Natural killer cell (primary cell): ENCODE measurements at regions of chr10 and their contacts with region 1.

Region 1: DNA sequence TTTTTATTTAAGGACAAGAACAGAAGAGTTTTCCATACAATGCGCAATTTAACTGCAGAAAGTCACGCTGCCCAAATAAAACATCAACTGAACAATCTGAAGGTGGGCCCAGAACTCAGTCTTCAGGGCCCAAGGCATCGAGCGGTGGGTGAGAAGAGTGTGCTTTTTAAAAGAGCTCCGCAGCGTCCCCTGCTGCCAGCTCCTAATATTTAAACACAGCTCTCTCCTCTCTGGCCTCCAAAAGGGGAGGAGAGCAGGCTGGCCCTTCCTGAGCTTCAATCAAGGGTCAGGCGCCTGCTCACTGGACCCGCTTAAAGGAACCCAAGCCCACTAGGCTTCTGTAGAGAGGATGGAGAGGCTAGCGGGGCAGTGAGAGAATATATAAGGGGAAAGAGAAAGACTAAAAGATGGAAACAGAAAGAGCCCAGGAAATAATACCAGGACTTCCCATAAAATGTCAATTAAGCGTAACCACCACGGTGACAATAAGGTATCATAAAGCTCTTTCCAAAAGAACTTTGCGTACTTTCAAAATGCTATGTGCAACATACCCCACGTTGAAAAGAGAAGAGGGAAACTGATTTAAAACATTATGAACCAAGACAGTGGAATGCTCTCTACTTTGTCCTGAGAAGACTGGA is 2.8 kb downstream of the FAM53B start:
- DNase-seq: peak; percentile 77 to 89
- ATAC-seq: peak; percentile 53 to 72 (median 60)
- H3K4me3 ChIP-seq: peak overlapping the region; percentile 55
- H3K4me3 Mint-ChIP-seq: peak overlapping the region; percentile 99
- H3K27ac ChIP-seq: peak overlapping the region; percentile 68
- H3K27ac Mint-ChIP-seq: peak overlapping the region; percentile 92 to 93
- H3K4me1 ChIP-seq: peaks cover 61% of the 10 kb centered on the region
- H3K4me1 Mint-ChIP-seq: peaks cover 70 to 82% of the 10 kb centered on the region in 2 donors
- H3K27me3 ChIP-seq: no peaks in the 10 kb centered on the region
- H3K27me3 Mint-ChIP-seq: no peaks in the 10 kb centered on the region
- CTCF ChIP-seq: peak; percentile 99

Region 2: GRCh38 chr10:124530215-124530665 is 211.2 kb before region 1 on chr10:
- intact Hi-C with region 1: loop called (anchors 1 kb)
- DNase-seq: peak; percentile 84 to 90
- ATAC-seq: peak; percentile 91 to 93 (median 93)
- H3K4me3 ChIP-seq: no peak overlapping the region
- H3K4me3 Mint-ChIP-seq: no peak overlapping the region
- H3K27ac ChIP-seq: no peak overlapping the region
- H3K27ac Mint-ChIP-seq: peak overlapping the region in 1 of 2 donors; percentile 69
- H3K4me1 ChIP-seq: peaks cover 29% of the 10 kb centered on the region
- H3K4me1 Mint-ChIP-seq: peaks cover 16 to 20% of the 10 kb centered on the region in 2 donors
- H3K27me3 ChIP-seq: no peaks in the 10 kb centered on the region
- H3K27me3 Mint-ChIP-seq: peaks cover 0 to 3% of the 10 kb centered on the region in 2 donors
- CTCF ChIP-seq: peak; percentile 77

Region 3: DNA sequence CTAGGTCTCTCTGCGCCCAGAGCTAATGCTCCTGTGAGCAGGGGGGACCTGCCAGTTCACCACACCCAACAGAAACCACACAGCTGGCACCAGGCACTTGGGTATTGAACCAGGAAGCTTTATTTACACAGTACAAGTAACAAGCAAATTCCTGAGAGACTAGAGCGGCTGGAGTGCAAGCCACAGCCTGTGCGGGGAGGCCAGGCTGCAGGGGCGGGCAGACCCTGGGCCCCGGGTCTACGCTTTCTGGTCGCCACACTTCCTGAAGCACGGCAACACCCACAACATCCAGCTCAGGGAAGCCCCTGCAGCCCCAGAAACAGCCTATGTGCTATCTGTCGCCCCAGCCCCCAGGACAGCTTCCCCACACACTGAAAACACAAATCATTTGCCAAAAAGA is 122.2 kb before region 1 on chr10:
- intact Hi-C with region 1: loop called (anchors 2 kb)
- DNase-seq: peak; percentile 37 to 62
- ATAC-seq: peak; percentile 68 to 85 (median 71)
- H3K4me3 ChIP-seq: no peak overlapping the region
- H3K4me3 Mint-ChIP-seq: peak overlapping the region; percentile 47
- H3K27ac ChIP-seq: peak overlapping the region; percentile 82
- H3K27ac Mint-ChIP-seq: peak overlapping the region; percentile 83 to 88
- H3K4me1 ChIP-seq: peaks cover 78% of the 10 kb centered on the region
- H3K4me1 Mint-ChIP-seq: peaks cover 43 to 73% of the 10 kb centered on the region in 2 donors
- H3K27me3 ChIP-seq: no peaks in the 10 kb centered on the region
- H3K27me3 Mint-ChIP-seq: no peaks in the 10 kb centered on the region
- CTCF ChIP-seq: no peak

Region 4: DNA sequence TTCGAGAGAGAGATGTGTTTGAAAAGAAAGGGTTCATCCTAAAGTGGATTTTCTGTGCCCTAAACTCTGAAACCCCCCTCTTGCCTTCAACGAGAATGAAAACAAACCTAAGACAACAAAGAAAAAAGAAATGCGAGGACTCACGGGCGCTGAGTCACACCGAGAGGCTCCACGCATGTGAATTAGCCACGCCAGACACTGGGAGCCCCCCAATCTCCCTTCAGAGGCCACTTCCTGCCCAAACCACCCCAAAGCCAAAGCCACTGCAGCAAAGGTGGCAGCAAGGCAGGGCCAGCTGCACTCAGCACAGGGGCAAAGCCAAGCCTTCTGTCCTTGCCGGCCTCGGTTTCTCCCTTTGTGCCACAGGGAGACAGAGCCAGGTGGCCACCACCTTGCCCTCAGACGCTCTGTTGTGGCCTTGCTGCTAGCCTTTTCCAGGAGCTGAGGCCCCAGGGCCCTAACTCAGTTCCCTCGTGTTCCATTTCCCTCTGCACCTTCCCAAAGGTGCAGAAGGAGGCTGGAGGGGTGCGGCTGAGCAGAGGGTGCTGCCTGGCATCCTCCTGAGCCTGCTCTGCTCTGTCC is 90.5 kb before region 1 on chr10:
- intact Hi-C with region 1: loop called (anchors 1 kb)
- DNase-seq: peak; percentile 81 to 87
- ATAC-seq: peak; percentile 57 to 77 (median 75)
- H3K4me3 ChIP-seq: no peak overlapping the region
- H3K4me3 Mint-ChIP-seq: peak overlapping the region; percentile 90
- H3K27ac ChIP-seq: peak overlapping the region; percentile 84
- H3K27ac Mint-ChIP-seq: peak overlapping the region; percentile 97 to 99
- H3K4me1 ChIP-seq: peaks cover 100% of the 10 kb centered on the region
- H3K4me1 Mint-ChIP-seq: peaks cover 56 to 90% of the 10 kb centered on the region in 2 donors
- H3K27me3 ChIP-seq: no peaks in the 10 kb centered on the region
- H3K27me3 Mint-ChIP-seq: no peaks in the 10 kb centered on the region
- CTCF ChIP-seq: no peak

Region 5: DNA sequence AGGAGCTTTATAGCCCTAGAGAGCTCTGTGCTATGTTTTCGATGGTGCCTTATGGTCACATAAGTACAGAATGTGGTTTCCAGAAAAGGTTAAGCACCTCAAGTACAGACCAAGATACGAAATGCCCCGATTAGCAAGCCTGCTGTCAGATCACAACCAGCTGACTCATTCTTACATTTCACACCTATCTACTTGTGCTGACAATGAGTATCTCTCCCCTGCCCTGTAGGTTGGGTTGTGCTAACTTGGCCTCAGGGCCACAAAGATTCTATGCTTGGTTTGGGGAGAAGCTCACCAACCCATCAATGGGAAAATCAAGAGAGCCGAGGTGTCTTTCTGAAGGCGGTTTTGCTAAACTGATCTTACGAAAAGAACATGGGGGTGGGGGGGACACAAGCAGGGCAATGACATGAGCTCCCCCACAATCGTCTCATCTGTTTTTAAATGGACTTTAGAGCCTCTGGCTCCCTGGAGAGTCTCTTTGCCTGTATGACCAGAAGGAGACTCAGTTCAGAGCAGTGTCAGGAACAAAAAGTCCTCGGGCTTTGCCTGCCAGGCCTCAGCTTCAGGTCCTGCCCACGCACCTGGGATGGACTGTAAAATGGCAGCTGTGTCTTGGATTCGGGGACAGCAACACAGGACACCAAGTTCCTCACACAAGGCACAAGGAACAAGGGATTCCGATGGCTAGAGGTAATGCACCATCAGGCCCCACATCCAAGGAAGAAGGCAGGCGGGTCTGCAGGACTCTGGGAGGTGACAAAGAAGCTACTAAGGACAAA is 52.3 kb before region 1 on chr10:
- intact Hi-C with region 1: loop called (anchors 1 kb)
- DNase-seq: peak; percentile 67 to 84
- ATAC-seq: peak; percentile 83 to 98 (median 95)
- H3K4me3 ChIP-seq: no peak overlapping the region
- H3K4me3 Mint-ChIP-seq: peak overlapping the region; percentile 81
- H3K27ac ChIP-seq: peak overlapping the region; percentile 67
- H3K27ac Mint-ChIP-seq: peak overlapping the region; percentile 91 to 98
- H3K4me1 ChIP-seq: peaks cover 94% of the 10 kb centered on the region
- H3K4me1 Mint-ChIP-seq: peaks cover 75 to 84% of the 10 kb centered on the region in 2 donors
- H3K27me3 ChIP-seq: no peaks in the 10 kb centered on the region
- H3K27me3 Mint-ChIP-seq: no peaks in the 10 kb centered on the region
- CTCF ChIP-seq: no peak

Region 6: DNA sequence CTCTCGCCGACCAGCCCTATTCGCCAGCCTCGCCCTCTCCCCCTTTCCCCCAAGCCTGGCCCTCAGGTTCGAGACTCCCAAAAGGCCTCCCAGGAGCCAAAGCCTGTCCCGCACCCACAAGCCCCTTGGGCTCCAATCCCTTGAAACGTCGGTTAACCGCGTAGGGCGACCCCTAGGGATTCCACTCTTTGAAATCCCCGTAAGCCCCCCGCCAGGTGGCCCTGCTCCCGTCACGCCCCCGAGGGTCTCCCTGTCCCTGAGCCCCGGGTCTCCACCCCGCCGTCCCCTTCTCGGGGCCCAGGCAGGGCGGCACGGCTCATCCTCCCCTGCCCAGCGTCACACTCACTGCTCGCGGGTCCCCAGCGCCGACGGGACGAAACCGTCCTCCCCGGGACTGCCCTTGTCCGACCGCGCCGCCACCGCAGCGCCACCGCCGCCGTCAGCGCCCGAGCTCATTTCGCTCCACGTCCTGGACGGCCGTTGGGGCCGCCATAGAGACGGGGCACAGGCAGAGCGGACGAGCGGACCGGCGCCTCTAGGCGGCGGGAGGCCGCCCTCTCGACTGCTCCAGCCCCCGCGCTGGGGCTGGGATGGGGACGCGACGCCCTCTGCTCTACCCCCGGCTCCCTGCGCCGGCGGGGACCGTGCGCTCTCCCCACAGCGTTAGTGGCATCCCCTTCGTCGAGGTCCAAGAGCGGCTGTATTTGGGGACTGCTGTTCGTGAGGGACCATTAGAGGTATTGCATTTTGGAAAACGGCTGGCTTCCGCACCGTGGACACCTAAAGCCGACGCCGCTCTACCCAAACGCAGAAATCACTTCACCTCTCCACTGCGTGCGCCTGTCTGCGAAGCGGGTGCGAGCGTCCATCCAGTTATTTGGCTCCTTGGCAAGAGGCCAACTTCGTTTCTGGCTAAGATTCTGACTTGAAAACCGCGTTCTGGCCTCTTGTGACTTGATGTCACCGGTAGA is 50.3 kb after region 1 on chr10 and contains the start of gene EEF1AKMT2:
- intact Hi-C with region 1: loop called (anchors 1 kb)
- DNase-seq: peak; percentile 81 to 90
- ATAC-seq: peak; percentile 96 to 98 (median 96)
- H3K4me3 ChIP-seq: peak within 1 kb of the TSS; percentile 98
- H3K4me3 Mint-ChIP-seq: peak within 1 kb of the TSS; percentile 98
- H3K27ac ChIP-seq: peak within 1 kb of the TSS; percentile 84
- H3K27ac Mint-ChIP-seq: peak within 1 kb of the TSS; percentile 91 to 98
- H3K4me1 ChIP-seq: peaks cover 24% of the 10 kb centered on the region
- H3K4me1 Mint-ChIP-seq: peaks cover 23 to 26% of the 10 kb centered on the region in 2 donors
- H3K27me3 ChIP-seq: no peaks in the 10 kb centered on the region
- H3K27me3 Mint-ChIP-seq: no peaks in the 10 kb centered on the region
- CTCF ChIP-seq: peak; percentile 31
- total RNA-seq, gene EEF1AKMT2: 12.5 to 20.6 (median 20.1) TPM